HepG2 (cell line): ENCODE measurements at regions of chr10 and their contacts with region 1.

Region 1: DNA sequence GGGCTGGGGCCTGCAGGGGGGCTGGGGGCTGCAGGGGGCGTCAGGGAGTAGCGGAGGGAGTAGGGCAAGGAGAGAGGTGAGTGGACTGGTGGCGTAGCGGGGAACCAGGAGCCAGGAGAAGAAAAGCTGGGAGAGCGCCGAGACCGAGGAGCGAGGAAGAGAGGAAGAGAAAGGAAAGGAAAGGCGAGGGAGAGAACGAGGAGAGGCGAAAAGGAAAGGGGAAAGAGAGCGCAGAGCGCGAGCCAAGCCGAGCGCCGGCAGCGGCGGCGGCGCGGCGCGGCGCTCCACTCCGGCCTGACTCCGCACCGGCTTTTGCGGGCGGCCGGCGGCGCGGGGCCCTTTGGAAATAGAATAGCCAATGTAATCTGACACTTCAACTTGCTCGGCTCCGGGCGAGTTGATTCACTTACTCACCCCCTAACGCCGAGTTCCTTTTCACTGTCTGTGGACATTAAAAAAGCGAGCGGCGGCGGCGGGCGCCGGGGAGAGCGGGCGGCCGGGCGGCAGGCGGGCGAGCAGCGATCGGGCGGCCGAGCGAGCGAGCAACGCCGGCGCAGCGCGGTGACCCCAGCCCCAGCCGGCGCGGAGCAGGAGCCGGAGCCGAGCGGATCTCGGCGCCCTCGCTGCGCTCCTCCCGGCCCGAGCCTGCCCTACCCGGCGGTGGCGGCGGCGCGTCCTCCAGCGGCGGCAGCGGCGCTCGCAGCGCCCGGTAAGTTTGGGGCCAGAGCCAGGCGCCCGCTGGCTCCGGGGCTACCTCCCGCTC is at the start of gene ZMIZ1:
- DNase-seq: peak; percentile 88
- ATAC-seq: peak; percentile 7
- H3K4me3 ChIP-seq: peak within 1 kb of the TSS; percentile 93 to 98 (median 93)
- H3K27ac ChIP-seq: peak within 1 kb of the TSS; percentile 91
- H3K4me1 ChIP-seq: peaks cover 56% of the 10 kb centered on the region
- H3K27me3 ChIP-seq: no peaks in the 10 kb centered on the region; a peak in 1 of 5 replicates
- CTCF ChIP-seq: no peak
- EP300 ChIP-seq: peak in 1 of 2 experiments; percentile 63; a peak in 2 of 4 replicates
- POLR2A ChIP-seq: peak in 1 of 2 experiments; percentile 71; a peak in 2 of 4 replicates
- RAD21 ChIP-seq: peak; percentile 67
- total RNA-seq, gene ZMIZ1: 5.3 and 11.0 TPM in 2 replicates

Region 2: GRCh38 chr10:78852466-78853240 is 216.1 kb before region 1 on chr10:
- CTCF ChIA-PET with region 1: no interaction called
- POLR2A ChIA-PET with region 1: interaction called, 4 read pairs
- in situ Hi-C with region 1: no loop called
- intact Hi-C with region 1: loop called (anchors 2 kb)
- DNase-seq: no peak
- ATAC-seq: peak; percentile 62
- H3K4me3 ChIP-seq: no peak overlapping the region
- H3K27ac ChIP-seq: no peak overlapping the region
- H3K4me1 ChIP-seq: peaks cover 12% of the 10 kb centered on the region
- H3K27me3 ChIP-seq: peaks cover 1 to 2% of the 10 kb centered on the region in 2 experiments; a peak in 3 of 5 replicates
- CTCF ChIP-seq: peak; percentile 24; the same call in 1 of the 2 replicates
- EP300 ChIP-seq: no peak
- POLR2A ChIP-seq: no peak
- RAD21 ChIP-seq: no peak

Region 3: GRCh38 chr10:78865538-78865875 is 203.2 kb before region 1 on chr10:
- CTCF ChIA-PET with region 1: no interaction called
- POLR2A ChIA-PET with region 1: no interaction called
- in situ Hi-C with region 1: no loop called
- intact Hi-C with region 1: no loop called
- DNase-seq: no peak
- ATAC-seq: no peak
- H3K4me3 ChIP-seq: no peak overlapping the region
- H3K27ac ChIP-seq: no peak overlapping the region
- H3K4me1 ChIP-seq: peaks cover 13% of the 10 kb centered on the region
- H3K27me3 ChIP-seq: peaks cover 6 to 36% of the 10 kb centered on the region in 2 experiments
- CTCF ChIP-seq: no peak
- EP300 ChIP-seq: no peak
- POLR2A ChIP-seq: no peak
- RAD21 ChIP-seq: no peak

Region 4: GRCh38 chr10:79105150-79105739 is 36.5 kb after region 1 on chr10:
- CTCF ChIA-PET with region 1: no interaction called
- POLR2A ChIA-PET with region 1: interaction called, 6 read pairs
- in situ Hi-C with region 1: no loop called
- intact Hi-C with region 1: loop called (anchors 5 kb)
- DNase-seq: peak; percentile 90
- ATAC-seq: peak; percentile 93
- H3K4me3 ChIP-seq: no peak overlapping the region; a peak in 1 of 6 replicates
- H3K27ac ChIP-seq: peak overlapping the region; percentile 69
- H3K4me1 ChIP-seq: peaks cover 88% of the 10 kb centered on the region
- H3K27me3 ChIP-seq: no peaks in the 10 kb centered on the region
- CTCF ChIP-seq: peak; percentile 28
- EP300 ChIP-seq: peak in 1 of 2 experiments; percentile 58; a peak in 2 of 4 replicates
- POLR2A ChIP-seq: no peak
- RAD21 ChIP-seq: peak; percentile 37; the same call in 1 of the 2 replicates

Region 5: DNA sequence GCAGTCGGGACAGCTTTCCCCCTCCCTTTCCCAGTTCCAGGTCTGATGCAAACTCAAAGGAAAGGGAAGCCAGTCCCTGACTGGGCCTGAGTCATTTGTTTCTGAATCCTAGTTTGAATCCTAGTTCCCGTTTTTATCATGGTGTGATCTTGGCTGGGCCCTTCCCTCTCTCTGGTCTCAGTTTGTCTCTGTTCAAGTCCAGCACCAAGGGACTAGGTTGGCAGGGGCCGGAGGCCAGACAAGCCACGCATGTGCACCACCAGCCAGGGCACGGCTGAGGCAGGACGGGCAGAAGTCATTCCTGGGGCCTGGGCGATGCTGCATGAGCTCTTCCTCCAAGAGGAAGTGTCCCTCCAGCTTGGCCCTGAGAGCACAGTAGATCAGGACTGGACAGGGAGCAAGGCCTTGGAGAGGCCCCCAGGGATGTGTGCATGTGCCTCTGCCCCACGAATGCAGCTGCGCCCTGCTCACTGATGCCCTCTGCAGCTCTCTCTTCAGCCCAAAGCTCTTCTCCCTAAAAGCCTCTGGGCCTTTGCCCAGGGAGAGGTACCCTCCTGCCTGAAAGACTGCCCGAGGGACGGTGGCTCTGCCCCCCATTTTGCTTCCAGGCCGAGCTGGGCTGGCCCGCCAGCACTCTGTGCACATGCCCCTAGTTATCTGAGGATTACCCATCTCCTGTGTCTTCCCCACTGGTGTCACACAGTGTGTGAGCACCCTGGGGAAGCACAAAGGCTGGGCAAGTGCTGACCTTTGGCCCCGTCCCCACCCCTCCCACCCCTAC is 86.7 kb after region 1 on chr10:
- CTCF ChIA-PET with region 1: no interaction called
- POLR2A ChIA-PET with region 1: interaction called, 18 read pairs
- in situ Hi-C with region 1: no loop called
- intact Hi-C with region 1: no loop called
- DNase-seq: no peak
- ATAC-seq: no peak
- H3K4me3 ChIP-seq: no peak overlapping the region
- H3K27ac ChIP-seq: peak overlapping the region; percentile 39
- H3K4me1 ChIP-seq: peaks cover 70% of the 10 kb centered on the region
- H3K27me3 ChIP-seq: no peaks in the 10 kb centered on the region
- CTCF ChIP-seq: no peak
- EP300 ChIP-seq: no peak
- POLR2A ChIP-seq: no peak
- RAD21 ChIP-seq: 0 out of 2 replicates have a peak, but pooled peaks have one; percentile 30